ENCODE measurements at regions of chr11 and their contacts with region 1.

Region 1: DNA sequence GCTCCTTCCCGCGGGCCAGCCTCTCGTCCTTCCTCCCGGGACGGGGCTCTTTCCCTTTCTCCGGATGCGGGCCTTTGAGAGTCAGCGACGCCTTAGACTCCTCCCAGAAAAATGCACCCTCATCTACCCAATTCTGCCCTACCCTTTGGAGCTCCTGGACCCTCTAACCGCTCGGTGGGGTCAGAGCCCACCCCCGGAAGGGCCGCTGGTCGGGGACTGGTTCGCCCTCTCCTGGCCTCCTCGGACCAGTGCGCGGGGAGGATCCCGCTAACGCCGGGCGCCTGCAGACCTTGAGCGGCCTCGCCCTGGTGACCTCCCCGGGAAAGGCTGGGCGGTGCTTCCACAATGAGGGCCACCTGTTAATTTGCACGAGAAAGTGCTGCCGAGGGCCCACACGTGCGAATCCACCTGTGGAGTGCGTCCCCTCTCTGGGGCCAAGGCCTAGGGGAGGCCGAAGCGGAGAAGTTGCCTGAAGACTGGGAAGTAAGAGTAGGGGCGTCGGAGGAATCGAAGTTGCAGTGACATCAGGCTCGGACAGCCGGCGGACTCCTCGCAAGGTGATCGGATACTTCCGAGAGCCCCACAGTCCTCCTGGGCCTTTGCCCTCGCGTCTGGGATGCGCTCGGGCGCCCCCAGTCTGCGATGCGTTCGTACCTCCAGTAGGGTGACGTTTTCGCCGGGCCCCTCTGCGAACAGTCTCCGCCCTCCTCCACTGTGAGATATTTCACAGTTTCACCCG is 61.5 kb downstream of the ENDOD1 start:
- DNase-seq: peak; percentile 78
- ATAC-seq: peak; percentile 90
- H3K4me3 Mint-ChIP-seq: peak overlapping the region; percentile 89
- H3K27ac Mint-ChIP-seq: peak overlapping the region; percentile 93
- H3K4me1 Mint-ChIP-seq: peaks cover 38% of the 10 kb centered on the region
- H3K27me3 Mint-ChIP-seq: no peaks in the 10 kb centered on the region
- CTCF ChIP-seq: no peak

Region 2: DNA sequence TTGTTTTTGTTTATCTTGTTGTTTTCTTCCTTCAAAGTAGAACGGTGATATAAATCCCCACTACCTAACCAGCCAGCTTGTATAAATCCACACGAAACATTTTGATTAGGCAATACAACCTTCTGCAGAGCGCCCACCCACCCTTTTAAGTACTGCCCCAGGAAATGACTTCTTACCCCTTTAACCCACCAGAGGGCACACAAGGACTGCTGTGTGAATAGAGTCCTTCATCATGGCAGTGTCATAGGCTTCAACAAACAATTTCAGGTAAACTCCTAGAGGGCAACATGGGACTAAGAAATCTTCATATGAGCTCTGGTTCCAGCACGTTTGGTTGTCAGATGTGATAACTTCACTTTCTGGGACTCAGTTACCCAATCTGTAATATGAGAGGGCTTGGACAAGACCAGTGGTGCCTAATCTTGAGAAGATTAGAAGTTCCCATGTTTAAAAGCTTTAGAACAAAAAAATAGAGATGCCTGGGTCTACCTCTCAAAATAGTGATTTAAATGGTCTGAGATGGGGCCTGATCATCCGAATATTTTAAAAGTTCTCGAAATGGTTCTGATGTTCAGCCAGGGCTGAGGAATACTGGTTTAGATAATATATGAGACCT is 527.9 kb before region 1 on chr11:
- CTCF ChIA-PET with region 1: interaction called, 5 read pairs
- POLR2A ChIA-PET with region 1: no interaction called
- intact Hi-C with region 1: loop called (anchors 2 kb)
- DNase-seq: no peak
- ATAC-seq: peak; percentile 58
- H3K4me3 Mint-ChIP-seq: no peak overlapping the region
- H3K27ac Mint-ChIP-seq: no peak overlapping the region
- H3K4me1 Mint-ChIP-seq: no peaks in the 10 kb centered on the region
- H3K27me3 Mint-ChIP-seq: peaks cover 14% of the 10 kb centered on the region
- CTCF ChIP-seq: no peak

Region 3: DNA sequence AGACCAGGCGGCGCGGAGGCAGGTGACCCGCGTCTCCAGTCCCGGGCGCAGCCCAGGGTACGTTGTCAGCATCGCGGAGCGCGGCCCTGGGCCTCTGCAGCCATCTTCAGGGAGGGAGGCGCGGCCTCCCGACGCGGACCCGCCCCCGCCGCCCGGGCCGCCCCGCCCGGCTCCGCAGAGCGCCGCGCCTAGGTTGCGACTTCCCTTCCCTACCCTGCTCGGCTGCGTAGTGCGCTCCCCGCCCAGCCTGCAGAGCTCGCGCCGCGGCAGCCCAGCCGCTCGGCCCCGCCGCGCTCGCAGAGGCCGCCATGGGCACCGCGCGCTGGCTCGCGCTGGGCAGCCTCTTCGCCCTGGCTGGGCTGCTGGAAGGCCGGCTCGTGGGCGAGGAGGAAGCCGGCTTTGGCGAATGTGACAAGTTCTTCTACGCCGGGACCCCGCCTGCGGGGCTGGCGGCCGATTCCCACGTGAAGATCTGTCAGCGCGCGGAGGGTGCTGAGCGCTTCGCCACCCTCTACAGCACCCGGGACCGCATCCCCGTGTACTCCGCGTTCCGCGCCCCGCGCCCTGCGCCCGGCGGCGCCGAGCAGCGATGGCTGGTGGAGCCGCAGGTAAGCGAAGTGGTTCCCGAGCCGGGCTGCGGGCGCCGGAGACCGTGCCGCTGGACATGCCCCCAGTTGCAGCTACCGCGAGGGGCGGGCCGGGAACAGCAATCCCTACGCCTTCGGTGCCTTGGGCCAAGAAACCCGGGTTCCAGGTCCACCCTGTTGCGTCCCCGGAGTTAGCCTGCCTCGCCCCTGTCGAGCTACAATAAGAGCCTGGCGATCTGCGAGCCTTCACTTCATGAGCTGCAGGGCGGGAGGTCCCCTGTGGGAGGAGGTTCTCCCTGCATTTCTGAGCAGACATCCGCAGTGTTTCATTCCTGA is 61.2 kb before region 1 on chr11 and contains the start of gene ENDOD1:
- CTCF ChIA-PET with region 1: interaction called, 9 read pairs
- POLR2A ChIA-PET with region 1: interaction called, 29 read pairs
- intact Hi-C with region 1: loop called (anchors 1 kb)
- DNase-seq: peak; percentile 88
- ATAC-seq: peak; percentile 93
- H3K4me3 Mint-ChIP-seq: peak within 1 kb of the TSS; percentile 92
- H3K27ac Mint-ChIP-seq: peak within 1 kb of the TSS; percentile 94
- H3K4me1 Mint-ChIP-seq: peaks cover 56% of the 10 kb centered on the region
- H3K27me3 Mint-ChIP-seq: no peaks in the 10 kb centered on the region
- CTCF ChIP-seq: no peak
- total RNA-seq, gene ENDOD1: 9.5 and 9.8 TPM in 2 replicates

Region 4: GRCh38 chr11:95705485-95706124 is 554.5 kb after region 1 on chr11:
- CTCF ChIA-PET with region 1: interaction called, 305 read pairs
- POLR2A ChIA-PET with region 1: interaction called, 61 read pairs
- intact Hi-C with region 1: loop called (anchors 1 kb)
- DNase-seq: peak; percentile 61
- ATAC-seq: peak; percentile 93
- H3K4me3 Mint-ChIP-seq: no peak overlapping the region
- H3K27ac Mint-ChIP-seq: no peak overlapping the region
- H3K4me1 Mint-ChIP-seq: peaks cover 26% of the 10 kb centered on the region
- H3K27me3 Mint-ChIP-seq: no peaks in the 10 kb centered on the region
- CTCF ChIP-seq: peak; percentile 93

Region 5: DNA sequence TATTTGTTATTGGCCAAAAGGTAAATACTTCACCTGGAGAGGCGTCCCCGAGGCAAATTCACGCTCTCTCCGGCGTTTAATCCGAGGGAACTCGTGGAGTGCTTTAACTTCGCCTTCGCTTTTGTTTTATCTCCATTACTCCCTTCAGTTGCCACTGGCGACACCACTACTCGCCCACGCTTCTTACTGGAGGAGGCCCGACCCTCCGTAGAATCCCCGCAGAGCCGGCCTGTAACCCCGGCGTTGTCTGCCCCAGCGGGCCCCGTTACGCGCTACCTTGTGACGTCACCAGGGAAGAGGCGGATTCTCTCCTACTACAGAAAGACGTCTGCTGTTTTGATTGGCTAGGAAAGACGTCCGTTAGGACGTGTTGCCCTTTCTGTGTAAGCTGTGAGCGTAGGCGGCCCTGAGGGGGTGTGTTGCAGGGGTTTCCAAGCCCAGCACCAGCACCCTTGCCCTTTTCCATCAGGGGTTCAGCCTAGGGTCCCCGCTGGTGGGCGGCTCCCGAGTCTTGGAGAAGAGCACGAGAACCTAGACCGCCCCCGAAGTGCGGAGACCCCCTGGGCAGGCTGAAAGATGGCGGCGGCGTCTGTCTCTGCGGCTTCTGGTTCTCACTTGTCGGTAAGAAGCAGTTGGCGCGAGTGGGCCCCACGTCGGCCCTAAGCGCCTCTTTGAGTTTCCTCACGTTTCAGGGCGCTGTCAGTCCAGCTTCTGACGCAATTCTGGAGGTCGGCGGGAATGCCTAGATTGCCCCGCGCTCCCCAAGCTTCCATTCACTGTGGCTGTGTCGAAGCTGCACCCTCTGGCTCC is 639.2 kb after region 1 on chr11 and contains the start of gene CEP57:
- CTCF ChIA-PET with region 1: interaction called, 7 read pairs
- POLR2A ChIA-PET with region 1: interaction called, 20 read pairs
- intact Hi-C with region 1: loop called (anchors 1 kb)
- DNase-seq: peak; percentile 84
- ATAC-seq: peak; percentile 64
- H3K4me3 Mint-ChIP-seq: peak within 1 kb of the TSS; percentile 100
- H3K27ac Mint-ChIP-seq: peak within 1 kb of the TSS; percentile 100
- H3K4me1 Mint-ChIP-seq: peaks cover 47% of the 10 kb centered on the region
- H3K27me3 Mint-ChIP-seq: no peaks in the 10 kb centered on the region
- CTCF ChIP-seq: no peak
- total RNA-seq, gene CEP57: 52.6 and 53.7 TPM in 2 replicates

Region 6: DNA sequence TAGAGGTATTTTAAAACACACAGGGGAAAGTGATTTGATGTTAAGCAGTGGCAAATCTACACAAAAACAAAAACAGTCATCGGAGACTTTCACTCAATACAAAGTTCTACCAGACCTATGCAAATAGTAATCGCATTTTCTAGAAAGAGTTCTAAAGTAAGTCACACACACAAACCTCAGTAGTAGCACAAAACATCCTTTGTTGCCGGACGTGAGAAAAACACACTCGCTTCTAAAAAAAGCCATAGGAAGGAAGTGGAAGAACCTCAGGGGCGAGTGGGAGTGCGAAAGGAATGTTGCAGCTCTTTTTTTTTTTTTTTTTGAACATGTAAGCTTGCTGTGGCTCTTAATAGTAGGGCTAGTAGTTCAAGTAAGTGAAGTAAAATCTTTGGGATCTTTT is 1103.0 kb after region 1 on chr11:
- CTCF ChIA-PET with region 1: no interaction called
- POLR2A ChIA-PET with region 1: no interaction called
- intact Hi-C with region 1: loop called (anchors 10 kb)
- DNase-seq: no peak
- ATAC-seq: no peak
- H3K4me3 Mint-ChIP-seq: peak overlapping the region; percentile 73
- H3K27ac Mint-ChIP-seq: peak overlapping the region; percentile 99
- H3K4me1 Mint-ChIP-seq: peaks cover 82% of the 10 kb centered on the region
- H3K27me3 Mint-ChIP-seq: no peaks in the 10 kb centered on the region
- CTCF ChIP-seq: no peak